HCT116 (cell line): ENCODE measurements at regions of chr10 and their contacts with region 1.

Region 1: DNA sequence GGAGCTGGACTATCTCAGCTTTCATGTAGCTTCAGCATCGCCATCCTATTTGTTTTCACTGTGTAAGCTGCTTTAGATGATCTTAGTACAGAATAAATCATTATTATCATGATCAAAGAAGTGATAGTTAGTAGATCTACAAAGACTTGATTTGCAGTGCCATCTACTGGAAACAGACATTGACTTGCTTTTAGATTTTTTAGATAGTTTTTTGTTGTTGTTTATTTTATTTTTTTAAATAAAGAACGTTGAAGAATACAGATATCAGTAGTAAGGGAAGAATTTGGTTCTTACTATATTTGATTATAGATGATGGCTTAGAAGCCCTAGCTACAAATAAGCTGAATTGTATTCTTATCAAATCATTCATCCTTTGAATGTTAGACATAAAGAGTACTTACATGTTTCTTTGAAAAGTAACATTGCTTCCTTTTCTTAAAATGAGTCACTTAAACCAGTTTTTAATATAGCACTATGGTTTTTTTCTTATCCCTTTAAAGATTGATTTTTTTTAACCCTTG is 6.3 kb upstream of the SFMBT2 start:
- DNase-seq: peak; percentile 18
- ATAC-seq: no peak
- H3K4me3 ChIP-seq: no peak overlapping the region
- H3K27ac ChIP-seq: no peak overlapping the region
- H3K4me1 ChIP-seq: no peaks in the 10 kb centered on the region
- H3K27me3 ChIP-seq: peaks cover 24% of the 10 kb centered on the region
- CTCF ChIP-seq: peak; percentile 15 to 58 (median 55); a peak in 4 of 6 replicates
- POLR2A ChIP-seq: no peak
- RAD21 ChIP-seq: peak; percentile 71

Region 2: DNA sequence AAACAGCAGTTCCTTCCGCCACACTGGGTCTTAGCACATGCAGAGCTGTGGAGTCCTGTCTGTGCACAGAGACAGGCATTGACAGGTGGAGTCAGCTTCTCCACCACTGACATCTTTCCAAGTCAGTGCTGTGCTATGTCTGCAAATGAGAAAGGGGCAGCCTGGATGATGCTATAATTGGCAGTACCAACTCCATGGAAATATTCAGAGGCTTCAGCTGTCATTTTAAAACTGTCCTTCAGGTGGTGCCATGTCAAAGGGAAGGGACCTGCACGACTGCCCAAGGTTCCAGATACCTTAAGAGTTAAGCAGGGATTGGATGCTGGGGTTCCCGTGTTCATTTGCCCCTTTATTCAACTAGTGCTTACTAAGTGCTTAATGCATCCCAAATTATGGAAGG is 579.0 kb before region 1 on chr10:
- CTCF ChIA-PET with region 1: no interaction called
- POLR2A ChIA-PET with region 1: no interaction called
- RAD21 ChIA-PET with region 1: no interaction called
- intact Hi-C with region 1: loop called (anchors 2 kb)
- DNase-seq: no peak
- ATAC-seq: peak; percentile 70
- H3K4me3 ChIP-seq: no peak overlapping the region
- H3K27ac ChIP-seq: no peak overlapping the region
- H3K4me1 ChIP-seq: no peaks in the 10 kb centered on the region
- H3K27me3 ChIP-seq: no peaks in the 10 kb centered on the region; the same call in 1 of the 2 replicates
- CTCF ChIP-seq: peak in 2 of 3 experiments; percentile 44 to 46; a peak in 4 of 6 replicates
- POLR2A ChIP-seq: no peak
- RAD21 ChIP-seq: peak; percentile 43

Region 3: DNA sequence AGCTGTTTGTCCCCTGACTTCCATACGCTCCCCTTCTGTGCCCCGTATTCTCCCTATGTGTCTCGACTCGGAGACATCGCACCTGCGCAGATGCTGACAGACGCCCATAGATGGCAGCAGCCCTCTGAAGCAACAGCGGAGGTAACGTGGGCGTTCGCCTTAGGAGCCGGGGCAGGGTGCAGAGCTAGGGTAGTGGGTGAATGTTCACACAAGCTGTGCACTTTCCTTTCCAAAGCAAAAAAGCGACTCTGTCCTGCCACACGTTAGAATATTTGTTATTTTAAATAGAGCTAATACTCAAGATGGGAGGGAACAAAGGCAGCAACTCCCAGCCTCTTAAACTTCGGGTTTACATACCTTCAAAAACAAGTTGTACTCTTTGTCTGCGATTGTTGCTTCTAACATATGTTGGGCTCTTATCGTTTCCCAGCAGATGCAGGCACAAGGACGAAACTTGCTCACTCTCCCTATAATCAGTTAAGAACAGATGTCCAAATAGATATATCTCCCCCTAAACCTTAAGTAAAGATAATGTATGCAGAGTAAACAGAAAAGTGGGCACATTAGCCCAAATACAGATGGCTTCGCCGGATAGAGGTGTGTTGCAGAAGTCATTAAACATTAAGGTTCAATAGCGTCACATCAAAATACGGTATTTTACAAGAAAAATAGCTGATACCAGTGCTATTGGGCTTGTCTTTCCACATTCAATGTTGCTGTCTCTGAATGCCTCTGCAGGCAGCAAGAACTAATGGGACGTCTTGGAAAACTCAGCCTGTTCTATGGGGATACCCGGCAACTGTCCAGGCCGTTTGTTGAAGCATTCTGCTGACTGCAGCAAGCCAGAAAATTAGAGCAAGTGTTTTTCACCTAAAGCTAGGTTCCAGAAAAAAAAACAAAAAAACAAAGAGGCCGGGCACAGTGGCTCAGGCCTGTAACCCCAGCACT is 496.8 kb before region 1 on chr10:
- CTCF ChIA-PET with region 1: interaction called, 3 read pairs
- POLR2A ChIA-PET with region 1: no interaction called
- RAD21 ChIA-PET with region 1: no interaction called
- intact Hi-C with region 1: loop called (anchors 1 kb)
- DNase-seq: peak; percentile 23
- ATAC-seq: peak; percentile 99
- H3K4me3 ChIP-seq: no peak overlapping the region
- H3K27ac ChIP-seq: no peak overlapping the region
- H3K4me1 ChIP-seq: no peaks in the 10 kb centered on the region; a peak in 1 of 4 replicates
- H3K27me3 ChIP-seq: peaks cover 13% of the 10 kb centered on the region
- CTCF ChIP-seq: peak; percentile 42 to 84 (median 70); a peak in 5 of 6 replicates
- POLR2A ChIP-seq: no peak
- RAD21 ChIP-seq: peak; percentile 62

Region 4: GRCh38 chr10:7121154-7121810 is 295.9 kb before region 1 on chr10:
- CTCF ChIA-PET with region 1: interaction called, 5 read pairs
- POLR2A ChIA-PET with region 1: no interaction called
- RAD21 ChIA-PET with region 1: no interaction called
- intact Hi-C with region 1: loop called (anchors 5 kb)
- DNase-seq: peak; percentile 8
- ATAC-seq: peak; percentile 70
- H3K4me3 ChIP-seq: no peak overlapping the region
- H3K27ac ChIP-seq: no peak overlapping the region
- H3K4me1 ChIP-seq: no peaks in the 10 kb centered on the region
- H3K27me3 ChIP-seq: 0 out of 2 replicates have a peak, but pooled peaks cover 12% of the 10 kb centered on the region
- CTCF ChIP-seq: peak in 2 of 3 experiments; percentile 72 to 73; a peak in 4 of 6 replicates
- POLR2A ChIP-seq: no peak
- RAD21 ChIP-seq: peak; percentile 33

Region 5: DNA sequence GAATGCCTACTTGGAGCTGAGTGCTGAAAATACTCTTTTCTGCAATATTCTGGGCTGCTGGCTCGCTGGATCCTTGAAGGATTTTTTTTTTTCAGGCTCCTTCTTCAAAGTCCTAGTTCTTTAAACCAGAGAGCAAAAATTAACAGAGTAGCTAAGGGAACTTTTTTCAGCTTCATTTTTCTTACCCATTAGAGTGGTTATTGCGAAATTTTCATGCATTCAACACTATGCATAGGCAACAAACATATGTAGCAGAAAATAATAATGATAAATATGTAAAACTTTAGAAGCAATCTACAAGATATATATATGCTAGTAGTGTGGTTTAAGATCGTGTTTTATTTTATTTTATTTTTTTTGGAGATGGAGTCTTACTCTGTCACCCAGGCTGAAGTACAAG is 271.0 kb before region 1 on chr10:
- CTCF ChIA-PET with region 1: no interaction called
- POLR2A ChIA-PET with region 1: no interaction called
- RAD21 ChIA-PET with region 1: no interaction called
- intact Hi-C with region 1: no loop called
- DNase-seq: no peak
- ATAC-seq: no peak
- H3K4me3 ChIP-seq: no peak overlapping the region
- H3K27ac ChIP-seq: no peak overlapping the region
- H3K4me1 ChIP-seq: no peaks in the 10 kb centered on the region
- H3K27me3 ChIP-seq: no peaks in the 10 kb centered on the region
- CTCF ChIP-seq: no peak
- POLR2A ChIP-seq: no peak
- RAD21 ChIP-seq: no peak

Region 6: DNA sequence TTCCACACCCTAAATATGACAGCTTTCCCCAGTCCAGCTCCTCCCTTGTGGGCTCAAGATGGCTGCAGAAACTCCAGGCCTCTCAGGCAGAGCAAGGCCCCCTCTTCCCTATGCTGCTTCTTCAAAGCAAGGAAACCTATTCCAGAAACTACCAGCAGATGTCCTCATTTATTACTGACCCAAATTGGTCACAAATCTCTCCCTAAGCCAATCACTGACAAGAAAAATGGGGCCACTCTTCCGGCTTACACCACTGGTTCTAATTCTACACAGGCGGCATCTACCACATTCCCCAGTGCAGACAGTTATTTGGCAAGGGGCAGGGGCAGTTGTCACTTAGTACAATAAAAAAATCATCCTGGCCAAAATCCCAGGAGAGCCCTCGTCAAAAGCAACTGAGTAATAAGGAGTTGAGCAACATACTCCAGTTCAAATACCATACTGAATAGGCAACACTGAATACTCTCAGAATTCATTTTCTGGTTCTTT is 156.7 kb before region 1 on chr10:
- CTCF ChIA-PET with region 1: interaction called, 3 read pairs
- POLR2A ChIA-PET with region 1: no interaction called
- RAD21 ChIA-PET with region 1: no interaction called
- intact Hi-C with region 1: loop called (anchors 2 kb)
- DNase-seq: peak; percentile 22
- ATAC-seq: peak; percentile 58
- H3K4me3 ChIP-seq: no peak overlapping the region
- H3K27ac ChIP-seq: no peak overlapping the region
- H3K4me1 ChIP-seq: no peaks in the 10 kb centered on the region; a peak in 1 of 4 replicates
- H3K27me3 ChIP-seq: peaks cover 5% of the 10 kb centered on the region
- CTCF ChIP-seq: peak in 2 of 3 experiments; percentile 40 to 50; a peak in 4 of 6 replicates
- POLR2A ChIP-seq: no peak
- RAD21 ChIP-seq: peak; percentile 31; the same call in 1 of the 2 replicates

Region 7: DNA sequence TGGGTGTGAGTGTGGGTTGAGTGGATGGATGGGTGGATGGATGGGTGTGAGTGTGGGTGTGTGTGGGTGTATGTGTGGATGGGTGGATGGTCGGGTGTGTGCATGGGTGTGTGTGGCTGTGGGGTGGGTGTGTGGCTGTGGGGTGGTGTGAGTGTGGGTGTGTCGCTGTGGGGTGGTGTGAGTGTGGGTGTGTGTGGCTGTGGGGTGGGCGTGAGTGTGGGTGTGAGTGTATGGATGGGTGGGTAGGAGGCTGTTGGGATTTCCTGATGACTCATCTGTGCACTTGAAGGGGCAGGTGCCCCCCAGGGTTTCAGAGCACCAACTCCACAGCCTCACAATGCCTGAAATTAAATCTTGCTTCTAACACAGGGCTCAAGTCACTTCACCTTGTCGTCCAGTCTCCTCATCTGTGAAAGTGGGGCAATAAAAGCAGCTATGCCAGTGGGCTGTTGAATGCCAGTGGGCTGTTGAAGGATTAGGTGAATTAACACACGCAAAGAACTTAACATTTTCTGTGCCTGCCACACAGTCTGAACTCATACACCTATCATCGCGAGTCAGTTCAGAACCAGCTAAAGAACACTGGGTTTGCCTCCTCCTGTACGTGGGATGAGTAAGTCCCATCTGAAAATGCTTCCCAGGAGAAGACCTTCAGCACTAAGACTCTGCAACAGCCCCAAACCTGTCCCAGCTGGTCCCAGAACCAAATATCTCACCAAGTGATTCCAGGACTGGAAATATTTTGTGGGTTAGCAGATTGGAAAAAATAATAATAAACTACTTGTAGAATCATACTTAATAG is 38.4 kb before region 1 on chr10:
- CTCF ChIA-PET with region 1: no interaction called
- POLR2A ChIA-PET with region 1: no interaction called
- RAD21 ChIA-PET with region 1: no interaction called
- intact Hi-C with region 1: no loop called
- DNase-seq: no peak
- ATAC-seq: no peak
- H3K4me3 ChIP-seq: no peak overlapping the region
- H3K27ac ChIP-seq: no peak overlapping the region
- H3K4me1 ChIP-seq: no peaks in the 10 kb centered on the region
- H3K27me3 ChIP-seq: no peaks in the 10 kb centered on the region
- CTCF ChIP-seq: no peak
- POLR2A ChIP-seq: no peak
- RAD21 ChIP-seq: no peak

Region 8: DNA sequence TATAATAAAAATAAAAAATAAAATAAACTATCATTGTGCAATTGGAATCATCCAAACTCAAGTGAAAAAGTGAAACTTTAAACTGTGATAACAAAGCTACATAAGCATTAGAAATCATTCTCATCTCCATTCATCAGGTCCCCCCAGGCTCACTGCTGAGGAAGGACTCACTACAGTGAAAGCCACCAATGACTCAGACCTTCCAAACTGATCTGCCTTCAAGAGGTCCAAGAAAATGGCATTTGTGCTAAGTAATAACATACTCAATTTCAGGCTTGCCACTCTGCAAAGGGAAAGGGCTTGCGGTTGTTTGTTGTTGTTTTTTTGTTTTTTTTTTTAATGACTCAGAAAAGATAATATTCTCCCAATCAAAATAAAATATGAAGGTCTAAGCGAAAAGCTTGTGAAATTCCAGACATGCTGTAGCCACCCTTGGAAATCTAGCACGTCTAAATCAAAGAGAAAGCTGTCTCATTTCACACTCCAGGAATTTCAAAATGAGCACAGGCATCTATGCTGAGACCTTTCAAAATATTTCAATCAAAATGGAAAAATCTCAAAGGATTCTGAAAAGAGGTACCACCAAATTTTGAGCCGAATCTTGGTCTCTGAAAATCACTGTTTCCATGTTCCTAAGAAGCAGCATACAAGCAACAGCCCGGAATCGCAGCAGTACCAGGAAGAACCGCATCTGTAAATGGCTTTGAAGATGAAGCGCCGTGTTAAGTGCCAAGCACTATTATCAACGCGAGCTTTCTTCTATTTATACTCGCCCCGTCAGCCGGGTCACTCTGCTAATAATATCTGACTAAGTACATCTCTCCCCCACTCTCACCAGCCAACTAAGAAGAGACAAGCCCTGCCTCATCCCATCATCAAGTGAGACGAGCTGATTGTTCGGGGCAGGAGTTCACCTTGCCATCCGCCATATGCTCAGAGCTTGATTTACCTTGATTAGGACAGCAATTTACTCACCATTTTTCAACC is 19.8 kb before region 1 on chr10:
- CTCF ChIA-PET with region 1: no interaction called
- POLR2A ChIA-PET with region 1: no interaction called
- RAD21 ChIA-PET with region 1: no interaction called
- intact Hi-C with region 1: no loop called
- DNase-seq: no peak
- ATAC-seq: no peak
- H3K4me3 ChIP-seq: no peak overlapping the region
- H3K27ac ChIP-seq: no peak overlapping the region
- H3K4me1 ChIP-seq: no peaks in the 10 kb centered on the region
- H3K27me3 ChIP-seq: peaks cover 3% of the 10 kb centered on the region; the same call in 1 of the 2 replicates
- CTCF ChIP-seq: no peak
- POLR2A ChIP-seq: no peak
- RAD21 ChIP-seq: no peak

Region 9: GRCh38 chr10:7520507-7521485 is 103.6 kb after region 1 on chr10:
- CTCF ChIA-PET with region 1: no interaction called
- POLR2A ChIA-PET with region 1: no interaction called
- RAD21 ChIA-PET with region 1: no interaction called
- intact Hi-C with region 1: no loop called
- DNase-seq: no peak
- ATAC-seq: no peak
- H3K4me3 ChIP-seq: no peak overlapping the region
- H3K27ac ChIP-seq: no peak overlapping the region
- H3K4me1 ChIP-seq: no peaks in the 10 kb centered on the region
- H3K27me3 ChIP-seq: no peaks in the 10 kb centered on the region
- CTCF ChIP-seq: no peak
- POLR2A ChIP-seq: no peak
- RAD21 ChIP-seq: no peak